IMR-90 (cell line): ENCODE measurements at regions of chr10 and their contacts with region 1.

Region 1: GRCh38 chr10:90912174-90912573 is 8.7 kb downstream of the ANKRD1 start:
- DNase-seq: no peak
- ATAC-seq: no peak
- H3K4me3 ChIP-seq: no peak overlapping the region
- H3K27ac ChIP-seq: no peak overlapping the region
- H3K4me1 ChIP-seq: peaks cover 1% of the 10 kb centered on the region
- H3K27me3 ChIP-seq: no peaks in the 10 kb centered on the region
- CTCF ChIP-seq: no peak
- POLR2A ChIP-seq: no peak
- RAD21 ChIP-seq: no peak

Region 2: GRCh38 chr10:91043173-91043910 is 131.2 kb after region 1 on chr10:
- CTCF ChIA-PET with region 1: no interaction called
- POLR2A ChIA-PET with region 1: no interaction called
- dilution Hi-C with region 1: no loop called
- in situ Hi-C with region 1: no loop called
- intact Hi-C with region 1: loop called (anchors 5 kb)
- DNase-seq: peak; percentile 16
- ATAC-seq: peak; percentile 76
- H3K4me3 ChIP-seq: no peak overlapping the region
- H3K27ac ChIP-seq: no peak overlapping the region
- H3K4me1 ChIP-seq: no peaks in the 10 kb centered on the region
- H3K27me3 ChIP-seq: peaks cover 15% of the 10 kb centered on the region
- CTCF ChIP-seq: peak; percentile 48
- POLR2A ChIP-seq: no peak
- RAD21 ChIP-seq: peak; percentile 51; the same call in 1 of the 2 replicates

Region 3: GRCh38 chr10:91088300-91089140 is 176.3 kb after region 1 on chr10:
- CTCF ChIA-PET with region 1: no interaction called
- POLR2A ChIA-PET with region 1: no interaction called
- dilution Hi-C with region 1: no loop called
- in situ Hi-C with region 1: no loop called
- intact Hi-C with region 1: loop called (anchors 5 kb)
- DNase-seq: peak; percentile 15
- ATAC-seq: peak; percentile 63
- H3K4me3 ChIP-seq: no peak overlapping the region
- H3K27ac ChIP-seq: no peak overlapping the region
- H3K4me1 ChIP-seq: 0 out of 2 replicates have a peak, but pooled peaks cover 3% of the 10 kb centered on the region
- H3K27me3 ChIP-seq: no peaks in the 10 kb centered on the region; the same call in 1 of the 2 replicates
- CTCF ChIP-seq: peak; percentile 29
- POLR2A ChIP-seq: no peak
- RAD21 ChIP-seq: peak; percentile 29

Region 4: GRCh38 chr10:91163269-91163868 is 251.2 kb after region 1 on chr10:
- CTCF ChIA-PET with region 1: interaction called, 3 read pairs
- POLR2A ChIA-PET with region 1: no interaction called
- dilution Hi-C with region 1: no loop called
- in situ Hi-C with region 1: no loop called
- intact Hi-C with region 1: loop called (anchors 10 kb)
- DNase-seq: peak; percentile 62
- ATAC-seq: peak; percentile 53
- H3K4me3 ChIP-seq: peak overlapping the region; percentile 68
- H3K27ac ChIP-seq: peak overlapping the region; percentile 58
- H3K4me1 ChIP-seq: peaks cover 6% of the 10 kb centered on the region; the same call in 1 of the 2 replicates
- H3K27me3 ChIP-seq: no peaks in the 10 kb centered on the region
- CTCF ChIP-seq: no peak
- POLR2A ChIP-seq: peak; percentile 91
- RAD21 ChIP-seq: no peak